Tibial artery (tissue), 4 donors: ENCODE measurements at regions of chr7 and their contacts with region 1.

Region 1: DNA sequence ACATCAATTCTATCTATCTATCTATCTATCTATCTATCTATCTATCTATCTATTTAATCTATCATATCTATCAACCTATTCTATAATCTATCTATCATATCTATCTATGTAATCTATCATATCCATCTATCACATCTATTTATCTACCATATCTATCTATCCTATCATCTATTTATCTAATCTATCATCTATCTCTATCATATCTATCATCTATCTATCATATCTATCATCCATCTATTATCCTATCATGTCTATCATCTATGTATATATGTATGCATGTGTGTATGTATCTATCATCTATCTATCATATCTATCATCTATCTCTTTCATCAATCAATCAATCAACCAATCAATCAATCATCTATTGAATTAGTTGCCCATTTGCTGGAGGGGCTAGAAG is 159.3 kb upstream of the GALNT17 start:
- DNase-seq: no peak
- H3K4me3 ChIP-seq: no peak overlapping the region
- H3K27ac ChIP-seq: no peak overlapping the region
- H3K4me1 ChIP-seq: no peaks in the 10 kb centered on the region
- H3K27me3 ChIP-seq: no peaks in the 10 kb centered on the region
- CTCF ChIP-seq: no peak

Region 2: DNA sequence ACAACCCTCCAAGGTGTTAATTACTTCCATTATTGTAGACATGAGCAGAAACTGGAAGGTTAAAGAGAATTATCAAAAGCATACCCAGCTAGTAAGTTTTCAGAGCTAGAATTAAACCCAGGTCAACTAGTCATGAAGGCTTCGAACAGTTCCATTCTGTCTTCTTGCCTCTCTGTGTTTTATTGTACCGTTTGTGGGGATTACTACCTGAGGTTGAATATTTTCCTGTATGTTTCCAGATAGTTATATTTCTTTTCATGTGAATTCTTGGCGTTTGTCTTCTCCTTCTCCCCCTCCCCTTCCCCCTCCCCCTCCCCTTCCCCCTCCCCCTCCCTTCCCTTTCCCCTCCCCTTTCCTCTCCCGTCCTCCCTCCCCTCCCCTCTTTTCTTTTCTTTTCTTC is 58.8 kb before region 1 on chr7:
- intact Hi-C with region 1: loop called (anchors 2 kb)
- DNase-seq: no peak
- H3K4me3 ChIP-seq: no peak overlapping the region
- H3K27ac ChIP-seq: no peak overlapping the region
- H3K4me1 ChIP-seq: no peaks in the 10 kb centered on the region
- H3K27me3 ChIP-seq: no peaks in the 10 kb centered on the region
- CTCF ChIP-seq: no peak

Region 3: GRCh38 chr7:71601851-71602250 is 629.2 kb after region 1 on chr7:
- intact Hi-C with region 1: no loop called
- DNase-seq: no peak
- H3K4me3 ChIP-seq: no peak overlapping the region
- H3K27ac ChIP-seq: no peak overlapping the region
- H3K4me1 ChIP-seq: peaks cover 0 to 12% (median 3%) of the 10 kb centered on the region in 4 donors
- H3K27me3 ChIP-seq: no peaks in the 10 kb centered on the region
- CTCF ChIP-seq: no peak